Naive thymus-derived CD8-positive, alpha-beta T cell (primary cell): ENCODE measurements at regions of chr7 and their contacts with region 1.

Region 1: DNA sequence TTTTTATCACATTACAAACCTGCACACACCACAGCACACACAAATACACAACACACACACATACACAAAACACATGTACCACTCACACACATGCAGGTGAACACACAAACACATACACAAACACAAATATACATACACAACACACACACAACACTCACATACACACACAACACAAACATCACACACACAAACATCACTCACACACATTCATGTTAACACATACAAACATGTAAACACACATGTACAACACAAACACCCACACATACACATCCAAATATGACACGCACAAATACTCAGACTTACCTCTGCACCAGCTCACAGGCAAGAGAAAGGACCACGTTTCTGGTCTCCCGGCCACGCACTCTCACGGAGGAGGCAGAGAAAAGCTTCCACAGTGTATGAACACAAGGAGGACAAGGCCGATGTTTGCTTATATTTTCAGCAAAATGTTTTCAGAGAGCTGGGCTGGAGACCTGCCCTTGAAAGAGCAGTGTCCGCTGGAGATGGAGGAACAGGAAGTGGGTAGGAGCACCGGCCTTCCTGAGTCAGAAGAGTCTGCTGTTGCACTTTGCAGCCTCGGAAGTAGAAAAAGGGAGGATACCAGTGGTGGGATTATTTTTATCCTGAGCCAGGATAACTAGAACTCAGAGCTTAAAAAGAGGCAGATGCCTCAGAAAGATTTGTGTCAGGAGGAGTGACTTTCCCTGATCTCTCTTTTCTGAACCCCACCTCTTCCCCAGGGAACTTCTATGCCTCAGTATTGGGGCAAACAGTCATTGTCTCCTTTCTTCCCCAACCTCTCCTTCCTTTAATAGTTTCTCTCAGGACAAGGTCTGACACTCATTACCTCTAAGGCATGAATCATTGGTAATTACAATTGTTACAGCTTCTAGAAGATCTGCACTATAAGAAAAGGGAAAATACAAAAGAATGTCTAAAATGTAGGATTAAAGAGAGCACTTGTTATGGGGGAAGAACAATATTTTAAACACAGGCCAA is at the start of gene GIMAP6:
- DNase-seq: peak; percentile 7 to 69 (median 32)
- ATAC-seq: peak; percentile 59 to 72
- H3K4me3 Mint-ChIP-seq: peak within 1 kb of the TSS; percentile 92 to 98 (median 96)
- H3K27ac Mint-ChIP-seq: peak within 1 kb of the TSS; percentile 90 to 98 (median 96)
- H3K4me1 Mint-ChIP-seq: peaks cover 41 to 87% (median 84%) of the 10 kb centered on the region in 4 donors
- H3K27me3 Mint-ChIP-seq: no peaks in the 10 kb centered on the region
- polyA plus RNA-seq, gene GIMAP6: 115 to 173 (median 121) TPM

Region 2: GRCh38 chr7:150448789-150449147 is 183.4 kb before region 1 on chr7:
- POLR2A ChIA-PET with region 1: interaction called, 101 read pairs
- DNase-seq: peak; percentile 71 to 93 (median 86)
- ATAC-seq: peak; percentile 22 to 44
- H3K4me3 Mint-ChIP-seq: peak overlapping the region; percentile 95 to 100 (median 99)
- H3K27ac Mint-ChIP-seq: peak overlapping the region; percentile 91 to 99 (median 97)
- H3K4me1 Mint-ChIP-seq: peaks cover 42 to 67% (median 52%) of the 10 kb centered on the region in 4 donors
- H3K27me3 Mint-ChIP-seq: no peaks in the 10 kb centered on the region

Region 3: DNA sequence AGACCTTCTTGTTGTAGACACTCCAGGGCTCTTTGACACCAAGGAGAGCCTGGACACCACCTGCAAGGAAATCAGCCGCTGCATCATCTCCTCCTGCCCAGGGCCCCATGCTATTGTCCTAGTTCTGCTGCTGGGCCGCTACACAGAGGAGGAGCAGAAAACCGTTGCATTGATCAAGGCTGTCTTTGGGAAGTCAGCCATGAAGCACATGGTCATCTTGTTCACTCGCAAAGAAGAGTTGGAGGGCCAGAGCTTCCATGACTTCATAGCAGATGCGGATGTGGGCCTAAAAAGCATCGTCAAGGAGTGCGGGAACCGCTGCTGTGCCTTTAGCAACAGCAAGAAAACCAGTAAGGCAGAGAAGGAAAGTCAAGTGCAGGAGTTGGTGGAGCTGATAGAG is 112.0 kb before region 1 on chr7:
- POLR2A ChIA-PET with region 1: interaction called, 48 read pairs
- DNase-seq: peak in 4 of 10 donors; percentile 27 to 70 (median 36)
- ATAC-seq: peak; percentile 19 to 26
- H3K4me3 Mint-ChIP-seq: peak overlapping the region; percentile 91 to 100 (median 99)
- H3K27ac Mint-ChIP-seq: peak overlapping the region; percentile 87 to 99 (median 94)
- H3K4me1 Mint-ChIP-seq: peaks cover 16 to 43% (median 35%) of the 10 kb centered on the region in 4 donors
- H3K27me3 Mint-ChIP-seq: no peaks in the 10 kb centered on the region

Region 4: DNA sequence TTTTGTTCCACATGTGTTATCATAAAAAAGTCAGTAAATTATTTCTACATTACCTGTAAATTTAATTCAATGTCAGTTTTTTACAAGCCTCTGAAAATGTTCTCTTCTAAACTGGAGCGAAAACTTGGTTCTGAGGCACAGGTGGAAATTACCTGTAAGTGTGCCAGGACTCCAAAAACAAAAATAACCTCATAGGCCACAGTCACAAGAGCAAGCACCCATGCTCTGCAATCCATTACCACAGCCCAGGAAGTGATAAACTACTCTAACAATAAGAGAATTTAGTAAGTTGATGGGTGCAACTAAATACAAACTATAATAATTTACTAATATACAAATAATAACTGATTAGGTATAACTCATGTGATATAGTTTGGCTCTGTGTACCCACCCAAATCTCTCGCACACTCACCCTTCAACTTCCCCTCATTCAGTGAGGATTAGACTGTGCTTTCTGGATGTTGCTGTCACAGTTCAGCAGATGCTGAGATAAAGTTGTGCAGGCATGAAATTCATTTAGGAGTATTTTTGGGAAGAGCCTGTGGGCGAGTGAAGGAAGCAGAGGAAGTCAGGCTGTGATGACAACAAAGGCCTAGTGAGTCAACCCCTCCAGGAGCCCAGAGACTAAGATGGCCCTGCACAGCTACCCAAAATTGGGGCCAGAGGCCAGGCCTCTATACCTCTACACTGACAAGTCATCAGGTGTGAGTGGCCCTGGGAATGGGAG is 16.4 kb after region 1 on chr7:
- POLR2A ChIA-PET with region 1: interaction called, 41 read pairs
- DNase-seq: peak in 2 of 10 donors; percentile 49 to 53
- ATAC-seq: peak; percentile 85 to 87
- H3K4me3 Mint-ChIP-seq: peak overlapping the region in 9 of 10 donors; percentile 43 to 75 (median 57)
- H3K27ac Mint-ChIP-seq: peak overlapping the region; percentile 82 to 94 (median 88)
- H3K4me1 Mint-ChIP-seq: peaks cover 16 to 77% (median 55%) of the 10 kb centered on the region in 4 donors
- H3K27me3 Mint-ChIP-seq: no peaks in the 10 kb centered on the region

Region 5: GRCh38 chr7:150675714-150676113 is 43.5 kb after region 1 on chr7:
- POLR2A ChIA-PET with region 1: interaction called, 118 read pairs
- DNase-seq: no peak
- ATAC-seq: no peak
- H3K4me3 Mint-ChIP-seq: peak overlapping the region; percentile 16 to 81 (median 61)
- H3K27ac Mint-ChIP-seq: peak overlapping the region; percentile 91 to 99 (median 95)
- H3K4me1 Mint-ChIP-seq: peaks cover 24 to 80% (median 77%) of the 10 kb centered on the region in 4 donors
- H3K27me3 Mint-ChIP-seq: no peaks in the 10 kb centered on the region

Region 6: GRCh38 chr7:150737265-150738055 is 105.3 kb after region 1 on chr7 and contains the start of gene GIMAP5:
- POLR2A ChIA-PET with region 1: interaction called, 64 read pairs
- DNase-seq: peak in 6 of 10 donors; percentile 27 to 60 (median 40)
- ATAC-seq: peak; percentile 67 to 76
- H3K4me3 Mint-ChIP-seq: peak within 1 kb of the TSS; percentile 88 to 100 (median 98)
- H3K27ac Mint-ChIP-seq: peak within 1 kb of the TSS; percentile 93 to 100 (median 96)
- H3K4me1 Mint-ChIP-seq: peaks cover 48 to 75% (median 68%) of the 10 kb centered on the region in 4 donors
- H3K27me3 Mint-ChIP-seq: no peaks in the 10 kb centered on the region
- polyA plus RNA-seq, gene GIMAP5: 320 to 506 (median 401) TPM

Region 7: GRCh38 chr7:150852371-150852920 is 220.3 kb after region 1 on chr7 and contains the start of gene AOC1:
- POLR2A ChIA-PET with region 1: no interaction called
- DNase-seq: peak in 1 of 10 donors; percentile 16
- ATAC-seq: no peak
- H3K4me3 Mint-ChIP-seq: no peak within 1 kb of the TSS
- H3K27ac Mint-ChIP-seq: peak within 1 kb of the TSS in 2 of 10 donors; percentile 4 to 52
- H3K4me1 Mint-ChIP-seq: peaks cover 0 to 10% (median 7%) of the 10 kb centered on the region in 4 donors
- H3K27me3 Mint-ChIP-seq: peaks cover 15 to 41% (median 32%) of the 10 kb centered on the region in 5 donors
- polyA plus RNA-seq, gene AOC1: not detected

Region 8: GRCh38 chr7:151076611-151077444 is 444.7 kb after region 1 on chr7:
- POLR2A ChIA-PET with region 1: no interaction called
- DNase-seq: no peak
- ATAC-seq: no peak
- H3K4me3 Mint-ChIP-seq: no peak overlapping the region
- H3K27ac Mint-ChIP-seq: peak overlapping the region in 1 of 10 donors; percentile 51
- H3K4me1 Mint-ChIP-seq: peaks cover 8 to 25% (median 22%) of the 10 kb centered on the region in 4 donors
- H3K27me3 Mint-ChIP-seq: no peaks in the 10 kb centered on the region